Motor neuron (in vitro differentiated cells): ENCODE measurements at regions of chr2 and their contacts with region 1.

Region 1: GRCh38 chr2:119476301-119477021 is 44.8 kb downstream of the TMEM37 start:
- ATAC-seq: peak; percentile 91 to 96 (median 92)
- H3K4me3 ChIP-seq: no peak overlapping the region
- H3K27ac ChIP-seq: no peak overlapping the region
- H3K4me1 ChIP-seq: no peaks in the 10 kb centered on the region

Region 2: GRCh38 chr2:119106301-119106897 is 370.1 kb before region 1 on chr2:
- in situ Hi-C with region 1: no loop called
- ATAC-seq: no peak
- H3K4me3 ChIP-seq: no peak overlapping the region
- H3K27ac ChIP-seq: no peak overlapping the region
- H3K4me1 ChIP-seq: no peaks in the 10 kb centered on the region

Region 3: DNA sequence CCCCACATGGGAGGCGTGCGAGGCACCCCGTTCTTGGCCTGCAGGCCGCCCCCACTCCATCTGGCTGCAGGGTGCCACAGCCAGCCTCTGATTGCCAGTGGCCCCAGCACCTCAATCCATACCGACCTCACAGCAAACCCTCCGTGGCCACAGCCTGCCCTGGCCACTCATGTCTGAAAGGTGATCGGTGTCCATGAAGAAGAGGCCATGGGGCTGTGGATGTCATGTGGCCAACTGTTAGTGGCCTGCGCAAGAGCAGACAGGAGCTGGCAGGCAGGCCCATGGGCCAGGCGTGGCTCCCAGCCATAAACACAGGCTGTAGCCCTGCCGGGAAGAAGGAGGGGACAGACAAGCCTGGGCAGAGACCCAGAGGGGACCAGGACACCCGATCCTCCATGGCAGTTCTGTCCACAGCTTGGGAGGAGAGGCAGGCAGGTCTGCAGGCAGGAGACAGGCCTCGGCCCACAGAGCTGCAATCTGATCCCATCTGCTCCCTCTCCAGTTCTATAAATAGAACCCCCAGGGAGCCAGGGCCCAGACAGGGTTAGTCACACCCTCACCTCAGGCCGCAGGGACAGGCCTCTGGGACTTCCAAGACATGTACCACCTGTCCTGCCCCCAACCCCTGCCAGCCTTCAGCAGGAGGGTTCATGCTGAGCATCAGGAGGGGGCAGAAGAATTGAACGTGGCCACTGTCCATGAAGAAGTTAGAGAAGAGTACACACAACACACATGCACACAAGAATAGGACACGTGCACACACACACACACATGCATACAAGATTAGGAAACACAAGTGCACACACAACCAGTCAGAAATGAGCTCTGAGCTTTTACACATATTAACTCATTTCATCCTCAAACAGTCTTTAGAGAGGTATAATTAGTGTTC is 235.9 kb before region 1 on chr2:
- in situ Hi-C with region 1: no loop called
- ATAC-seq: peak; percentile 86 to 99 (median 97)
- H3K4me3 ChIP-seq: no peak overlapping the region
- H3K27ac ChIP-seq: peak overlapping the region; percentile 2 to 73
- H3K4me1 ChIP-seq: peaks cover 12 to 13% of the 10 kb centered on the region in 2 donors

Region 4: DNA sequence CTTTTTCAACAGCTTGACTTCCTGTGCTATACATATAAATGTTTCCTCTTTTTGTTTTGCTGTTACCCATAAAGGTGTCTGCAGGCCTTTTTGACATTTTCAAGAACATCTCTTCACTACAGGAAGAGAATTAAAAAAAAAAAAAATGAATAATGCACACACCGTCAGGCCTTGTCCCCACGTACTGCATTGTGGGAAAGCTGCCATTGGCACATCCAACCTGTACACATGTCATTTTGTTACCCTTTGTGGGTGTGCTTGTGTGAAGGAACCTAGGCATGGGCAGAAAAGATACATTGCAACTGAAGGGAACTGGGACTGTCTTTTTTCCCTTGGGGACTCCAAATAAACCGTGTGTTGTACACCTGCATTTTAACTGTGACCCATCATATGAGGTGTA is 61.6 kb before region 1 on chr2:
- in situ Hi-C with region 1: loop called in 1 of 9 experiments (anchors 5 kb)
- ATAC-seq: no peak
- H3K4me3 ChIP-seq: no peak overlapping the region
- H3K27ac ChIP-seq: no peak overlapping the region
- H3K4me1 ChIP-seq: peaks cover 0 to 2% of the 10 kb centered on the region in 2 donors

Region 5: GRCh38 chr2:120150040-120150482 is 673.6 kb after region 1 on chr2:
- in situ Hi-C with region 1: no loop called
- ATAC-seq: no peak
- H3K4me3 ChIP-seq: no peak overlapping the region
- H3K27ac ChIP-seq: no peak overlapping the region
- H3K4me1 ChIP-seq: no peaks in the 10 kb centered on the region